ENCODE measurements at regions of chr1 and their contacts with region 1.

Region 1: DNA sequence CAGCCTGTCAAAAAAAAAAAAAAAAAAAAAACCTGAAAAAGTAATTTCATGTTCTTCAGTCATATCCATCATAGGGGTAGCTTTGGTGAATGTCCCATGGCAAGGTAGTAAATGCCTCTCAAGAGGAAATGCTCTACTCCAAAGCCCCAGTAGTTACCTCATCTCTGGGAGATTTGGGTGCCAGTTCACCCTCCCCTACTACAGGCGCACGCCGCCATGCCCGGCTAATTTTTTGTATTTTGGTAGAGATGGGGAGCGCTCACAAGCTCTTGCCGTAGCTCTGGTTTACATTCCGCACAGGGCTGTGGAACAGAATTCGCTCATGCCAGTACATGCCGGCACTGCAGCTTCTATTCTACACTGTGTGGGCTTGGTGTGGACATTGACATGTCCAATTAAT is 13.7 kb downstream of the PIK3CD start:
- DNase-seq: no peak
- ATAC-seq: no peak
- H3K4me3 Mint-ChIP-seq: peak overlapping the region; percentile 13
- H3K27ac Mint-ChIP-seq: peak overlapping the region; percentile 74
- H3K4me1 Mint-ChIP-seq: peaks cover 67% of the 10 kb centered on the region
- H3K27me3 Mint-ChIP-seq: no peaks in the 10 kb centered on the region
- CTCF ChIP-seq: no peak

Region 2: DNA sequence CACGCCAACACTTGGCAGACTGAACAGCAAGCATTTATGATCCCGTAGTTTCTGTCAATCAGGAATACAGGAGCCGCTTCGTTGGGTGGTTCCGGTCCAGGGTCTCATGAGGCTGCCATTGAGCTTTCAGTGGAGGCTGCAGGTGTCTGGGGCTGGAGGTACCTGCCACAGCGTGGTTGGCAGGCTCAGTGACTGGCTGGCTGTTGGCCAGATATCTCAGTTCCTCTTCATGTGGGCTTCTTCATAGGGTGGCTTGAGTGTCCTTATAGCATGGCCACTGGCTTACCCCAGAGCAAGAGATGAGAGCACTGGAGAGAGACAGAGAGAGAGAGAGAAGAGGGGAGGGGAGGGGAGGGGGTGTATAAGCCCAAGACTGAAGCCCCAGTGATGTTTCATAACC is 15.6 kb after region 1 on chr1:
- CTCF ChIA-PET with region 1: interaction called, 5 read pairs
- POLR2A ChIA-PET with region 1: interaction called, 20 read pairs
- intact Hi-C with region 1: no loop called
- DNase-seq: no peak
- ATAC-seq: no peak
- H3K4me3 Mint-ChIP-seq: no peak overlapping the region
- H3K27ac Mint-ChIP-seq: peak overlapping the region; percentile 84
- H3K4me1 Mint-ChIP-seq: peaks cover 59% of the 10 kb centered on the region
- H3K27me3 Mint-ChIP-seq: no peaks in the 10 kb centered on the region
- CTCF ChIP-seq: no peak

Measured in activated CD8-positive, alpha-beta T cell treated with anti-CD3 and anti-CD28 coated beads for 36 hours (primary cell).